ENCODE measurements at regions of chr15 and their contacts with region 1.

Region 1: GRCh38 chr15:52568601-52569256 is at the start of gene ARPP19:
- DNase-seq: peak; percentile 78 to 97 (median 91)

Region 2: DNA sequence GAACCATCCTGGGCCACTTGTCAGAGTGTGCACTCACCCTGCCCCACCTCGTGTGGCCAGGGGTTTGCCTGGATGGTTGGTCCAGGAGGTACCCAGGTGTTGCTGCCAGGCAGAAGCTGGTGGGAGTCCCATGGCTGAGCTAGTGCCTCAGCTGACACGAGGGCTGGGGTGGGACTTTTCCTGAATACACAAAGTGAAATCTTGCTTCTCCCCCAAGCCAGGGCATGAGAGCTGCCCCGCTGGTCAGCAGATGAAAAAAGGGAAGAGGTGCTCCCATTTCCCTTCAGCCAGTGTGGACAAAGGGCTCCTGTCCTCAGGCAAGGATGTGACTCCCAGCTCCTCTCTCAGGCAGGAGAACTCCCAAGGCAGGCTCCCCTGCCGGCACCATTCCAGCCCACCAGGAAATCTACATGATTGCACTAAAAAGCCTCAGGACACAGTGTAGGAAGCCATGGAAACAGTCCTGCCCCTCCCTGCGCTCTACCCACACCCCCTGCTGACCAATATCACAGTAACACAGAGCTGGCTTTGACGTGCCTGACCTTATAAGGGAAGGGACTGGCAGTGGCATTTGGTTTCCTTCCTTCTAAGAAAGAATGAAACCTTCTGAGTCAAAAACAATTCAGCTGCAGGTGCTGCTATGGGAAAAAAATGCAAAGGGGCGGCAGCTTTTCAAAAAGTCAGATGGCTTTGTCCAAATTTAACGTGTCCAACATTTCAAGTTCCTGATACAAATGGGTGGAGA is 307.1 kb before region 1 on chr15:
- intact Hi-C with region 1: loop called (anchors 10 kb)
- DNase-seq: peak in 11 of 42 donors; percentile 20 to 52 (median 40)

Region 3: GRCh38 chr15:52636459-52636858 is 67.7 kb after region 1 on chr15:
- intact Hi-C with region 1: no loop called
- DNase-seq: no peak

Region 4: DNA sequence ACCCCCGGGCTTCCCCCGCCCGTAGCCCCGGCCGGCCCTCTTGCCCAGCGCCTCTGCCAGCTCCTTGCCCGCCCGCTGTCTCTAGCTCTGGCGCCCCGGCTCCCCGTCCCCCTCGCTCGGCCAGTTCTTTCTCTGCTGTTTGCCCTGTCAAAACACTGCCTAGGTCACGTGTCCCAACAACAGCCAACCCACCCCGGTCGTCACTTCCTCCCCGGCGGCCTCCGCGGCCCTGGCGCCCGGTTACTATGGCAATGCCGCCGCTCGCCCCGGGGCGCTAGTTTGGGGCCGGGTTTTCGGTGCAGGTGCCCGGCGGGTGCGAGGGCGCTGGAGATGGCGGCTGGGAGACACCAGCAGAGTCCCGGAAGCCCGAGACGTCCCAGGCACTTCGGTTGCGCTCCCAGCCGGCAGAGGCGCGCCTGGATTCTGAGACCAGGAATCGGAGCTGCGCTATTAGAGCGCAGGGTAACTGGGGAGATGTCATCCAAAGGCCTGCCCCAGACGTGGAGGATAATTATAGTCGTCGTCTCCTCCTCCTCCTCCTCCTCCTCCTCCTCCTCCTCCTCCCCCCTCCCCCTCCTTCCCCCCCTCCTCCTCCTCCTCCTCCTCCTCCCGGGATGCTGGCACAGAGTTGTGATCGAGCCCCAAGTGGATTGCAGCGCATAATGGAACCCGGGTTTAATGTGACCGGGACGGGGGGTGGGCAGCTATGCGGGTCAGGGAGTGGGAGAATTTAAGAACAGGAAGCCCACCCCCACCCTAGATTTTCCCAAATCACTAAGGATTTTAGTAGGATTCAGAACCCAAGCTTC is 110.7 kb after region 1 on chr15 and contains the start of gene ATOSA:
- intact Hi-C with region 1: loop called (anchors 5 kb)
- DNase-seq: peak; percentile 94 to 99 (median 97)